ENCODE measurements at regions of chr2 and their contacts with region 1.

Region 1: GRCh38 chr2:171598713-171599319 is 76.5 kb downstream of the CYBRD1 start:
- DNase-seq: peak; percentile 24
- ATAC-seq: peak; percentile 100
- H3K4me3 ChIP-seq: no peak overlapping the region
- H3K27ac ChIP-seq: no peak overlapping the region
- H3K4me1 ChIP-seq: no peaks in the 10 kb centered on the region
- H3K27me3 ChIP-seq: no peaks in the 10 kb centered on the region
- CTCF ChIP-seq: peak; percentile 71 to 85 (median 82)
- EP300 ChIP-seq: no peak
- POLR2A ChIP-seq: no peak
- RAD21 ChIP-seq: peak; percentile 77

Region 2: GRCh38 chr2:171587567-171587966 is 11.2 kb before region 1 on chr2:
- CTCF ChIA-PET with region 1: interaction called, 20 read pairs
- POLR2A ChIA-PET with region 1: no interaction called
- RAD21 ChIA-PET with region 1: no interaction called
- SMC1A ChIA-PET with region 1: interaction called, 7 read pairs
- in situ Hi-C with region 1: no loop called
- intact Hi-C with region 1: no loop called
- DNase-seq: no peak
- ATAC-seq: no peak
- H3K4me3 ChIP-seq: no peak overlapping the region
- H3K27ac ChIP-seq: no peak overlapping the region
- H3K4me1 ChIP-seq: no peaks in the 10 kb centered on the region
- H3K27me3 ChIP-seq: no peaks in the 10 kb centered on the region; a peak in 1 of 4 replicates
- CTCF ChIP-seq: no peak
- EP300 ChIP-seq: no peak
- POLR2A ChIP-seq: no peak
- RAD21 ChIP-seq: no peak

Region 3: DNA sequence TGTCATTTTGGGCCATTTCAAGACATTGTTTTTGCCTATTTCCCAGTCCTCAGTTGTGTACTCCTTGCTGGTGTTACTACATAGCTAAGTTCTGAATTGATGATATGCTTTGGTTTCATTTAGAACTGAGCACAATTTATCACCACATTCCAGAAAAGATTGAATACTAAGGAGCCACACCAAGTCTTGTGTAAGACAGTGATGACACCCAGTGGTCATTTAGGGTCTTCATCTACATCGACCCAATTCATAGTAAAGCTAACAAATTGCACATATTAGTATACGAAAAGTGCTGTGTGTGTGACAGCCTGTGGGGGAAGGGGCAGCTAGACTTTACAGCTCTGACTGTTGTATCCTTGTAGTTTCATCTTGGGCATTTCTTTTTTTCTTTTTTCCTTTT is 514.8 kb after region 1 on chr2:
- CTCF ChIA-PET with region 1: interaction called, 19 read pairs
- POLR2A ChIA-PET with region 1: no interaction called
- RAD21 ChIA-PET with region 1: no interaction called
- SMC1A ChIA-PET with region 1: no interaction called
- in situ Hi-C with region 1: loop called (anchors 10 kb)
- intact Hi-C with region 1: no loop called
- DNase-seq: no peak
- ATAC-seq: peak; percentile 68
- H3K4me3 ChIP-seq: no peak overlapping the region
- H3K27ac ChIP-seq: no peak overlapping the region
- H3K4me1 ChIP-seq: no peaks in the 10 kb centered on the region
- H3K27me3 ChIP-seq: 0 out of 4 replicates have a peak, but pooled peaks cover 0 to 1% of the 10 kb centered on the region in 2 experiments
- CTCF ChIP-seq: peak in 2 of 3 experiments; percentile 33 to 55; a peak in 4 of 6 replicates
- EP300 ChIP-seq: no peak
- POLR2A ChIP-seq: no peak
- RAD21 ChIP-seq: peak; percentile 59

Region 4: GRCh38 chr2:172131713-172132555 is 533.1 kb after region 1 on chr2:
- CTCF ChIA-PET with region 1: interaction called, 13 read pairs
- POLR2A ChIA-PET with region 1: no interaction called
- RAD21 ChIA-PET with region 1: interaction called, 5 read pairs
- SMC1A ChIA-PET with region 1: no interaction called
- in situ Hi-C with region 1: no loop called
- intact Hi-C with region 1: loop called (anchors 5 kb)
- DNase-seq: no peak
- ATAC-seq: no peak
- H3K4me3 ChIP-seq: no peak overlapping the region
- H3K27ac ChIP-seq: no peak overlapping the region
- H3K4me1 ChIP-seq: no peaks in the 10 kb centered on the region
- H3K27me3 ChIP-seq: peaks cover 0 to 2% of the 10 kb centered on the region in 2 experiments; a peak in 2 of 4 replicates
- CTCF ChIP-seq: no peak
- EP300 ChIP-seq: no peak
- POLR2A ChIP-seq: no peak
- RAD21 ChIP-seq: no peak

Measured in GM12878 (cell line).